ENCODE measurements at regions of chr3 and their contacts with region 1.

Region 1: DNA sequence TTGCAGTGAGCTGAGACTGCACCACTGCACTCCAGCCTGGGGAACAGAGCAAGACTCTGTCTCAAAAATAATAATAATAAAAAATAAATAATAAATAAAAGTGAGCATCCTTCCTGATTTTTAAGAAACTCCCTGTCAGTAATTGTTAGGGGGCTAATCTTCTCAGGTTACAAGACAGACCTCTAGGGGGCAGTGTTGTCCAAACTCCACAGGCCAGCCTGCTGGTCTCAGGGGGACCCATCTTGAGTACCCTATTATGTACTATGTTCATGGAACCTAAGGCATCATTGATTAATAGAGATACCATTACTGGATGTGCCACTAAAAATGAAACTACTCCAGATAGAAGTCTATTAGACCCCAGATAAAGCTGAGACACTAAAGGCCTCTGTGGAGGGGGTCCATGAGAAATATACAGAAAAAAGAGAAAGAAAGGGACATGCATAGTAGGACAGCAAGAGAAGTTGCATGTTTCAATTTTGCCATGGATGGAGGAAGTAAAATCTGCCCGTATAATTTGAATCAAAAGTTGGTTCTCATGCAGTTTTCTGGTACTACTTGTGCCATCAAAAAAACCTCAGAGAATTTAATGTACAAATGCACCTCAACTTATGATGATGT is 85.5 kb upstream of the CDV3 start:
- DNase-seq: no peak
- ATAC-seq: peak; percentile 63 to 78 (median 68)
- H3K4me3 ChIP-seq: no peak overlapping the region
- H3K27ac ChIP-seq: no peak overlapping the region
- H3K4me1 ChIP-seq: no peaks in the 10 kb centered on the region
- H3K27me3 ChIP-seq: no peaks in the 10 kb centered on the region
- CTCF ChIP-seq: peak; percentile 51 to 74 (median 72)
- POLR2A ChIP-seq: no peak

Region 2: GRCh38 chr3:133230195-133230594 is 257.8 kb before region 1 on chr3:
- intact Hi-C with region 1: no loop called
- DNase-seq: no peak
- ATAC-seq: no peak
- H3K4me3 ChIP-seq: no peak overlapping the region
- H3K27ac ChIP-seq: no peak overlapping the region
- H3K4me1 ChIP-seq: no peaks in the 10 kb centered on the region
- H3K27me3 ChIP-seq: no peaks in the 10 kb centered on the region
- CTCF ChIP-seq: no peak
- POLR2A ChIP-seq: no peak

Region 3: DNA sequence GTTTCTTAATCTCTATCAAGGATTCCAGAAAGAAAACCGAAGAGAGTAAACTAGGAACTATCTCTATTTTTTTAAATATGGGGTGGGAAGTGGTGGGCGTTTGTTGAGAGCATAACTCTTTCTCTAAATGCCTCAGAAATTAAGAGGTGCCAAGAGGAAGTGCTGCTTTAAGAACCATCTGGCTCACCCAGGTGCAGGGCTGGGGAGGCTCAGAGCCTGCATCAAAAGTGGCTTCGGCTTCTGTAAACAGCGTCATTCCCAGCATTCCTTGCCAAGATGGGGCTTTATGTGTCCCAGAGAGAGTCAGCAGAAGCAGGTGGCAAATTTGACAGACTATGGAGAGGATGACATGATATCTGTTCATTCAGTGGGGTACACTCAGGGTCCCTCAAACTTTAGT is 211.4 kb before region 1 on chr3:
- intact Hi-C with region 1: no loop called
- DNase-seq: no peak
- ATAC-seq: no peak
- H3K4me3 ChIP-seq: no peak overlapping the region
- H3K27ac ChIP-seq: no peak overlapping the region
- H3K4me1 ChIP-seq: no peaks in the 10 kb centered on the region
- H3K27me3 ChIP-seq: no peaks in the 10 kb centered on the region
- CTCF ChIP-seq: no peak
- POLR2A ChIP-seq: no peak

Region 4: DNA sequence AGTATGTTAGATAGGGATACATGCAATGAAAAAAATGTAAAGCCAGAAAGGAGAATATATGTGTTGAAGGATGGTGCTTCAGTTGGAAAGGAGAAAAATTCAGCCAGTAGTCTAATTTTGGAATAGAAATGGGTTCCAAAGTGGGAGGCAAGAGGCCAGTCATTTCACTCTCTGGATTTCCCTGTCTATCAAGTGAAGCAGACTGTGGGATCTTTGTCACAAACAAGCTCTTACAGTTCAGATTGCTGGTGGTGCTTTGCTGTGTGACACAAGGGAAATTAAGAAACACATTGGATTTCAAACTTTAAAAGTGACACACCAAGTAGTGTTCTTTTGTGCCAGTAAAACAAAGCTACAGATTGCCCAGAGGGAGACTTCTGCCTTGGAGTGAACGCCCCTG is 170.2 kb before region 1 on chr3:
- intact Hi-C with region 1: no loop called
- DNase-seq: no peak
- ATAC-seq: no peak
- H3K4me3 ChIP-seq: no peak overlapping the region
- H3K27ac ChIP-seq: no peak overlapping the region
- H3K4me1 ChIP-seq: no peaks in the 10 kb centered on the region
- H3K27me3 ChIP-seq: no peaks in the 10 kb centered on the region
- CTCF ChIP-seq: no peak
- POLR2A ChIP-seq: no peak

Region 5: GRCh38 chr3:133573054-133573628 is 85.1 kb after region 1 on chr3:
- intact Hi-C with region 1: loop called in 1 of 2 experiments (anchors 10 kb)
- DNase-seq: peak; percentile 100
- ATAC-seq: peak; percentile 88 to 95 (median 91)
- H3K4me3 ChIP-seq: peak overlapping the region; percentile 46 to 84 (median 72)
- H3K27ac ChIP-seq: peak overlapping the region; percentile 77 to 95 (median 79)
- H3K4me1 ChIP-seq: peaks cover 0 to 31% (median 8%) of the 10 kb centered on the region in 4 donors
- H3K27me3 ChIP-seq: no peaks in the 10 kb centered on the region
- CTCF ChIP-seq: peak; percentile 14 to 27 (median 19)
- POLR2A ChIP-seq: peak; percentile 62

Measured in right lobe of liver (tissue), 6 donors.